ENCODE measurements at regions of chr5 and their contacts with region 1.

Region 1: DNA sequence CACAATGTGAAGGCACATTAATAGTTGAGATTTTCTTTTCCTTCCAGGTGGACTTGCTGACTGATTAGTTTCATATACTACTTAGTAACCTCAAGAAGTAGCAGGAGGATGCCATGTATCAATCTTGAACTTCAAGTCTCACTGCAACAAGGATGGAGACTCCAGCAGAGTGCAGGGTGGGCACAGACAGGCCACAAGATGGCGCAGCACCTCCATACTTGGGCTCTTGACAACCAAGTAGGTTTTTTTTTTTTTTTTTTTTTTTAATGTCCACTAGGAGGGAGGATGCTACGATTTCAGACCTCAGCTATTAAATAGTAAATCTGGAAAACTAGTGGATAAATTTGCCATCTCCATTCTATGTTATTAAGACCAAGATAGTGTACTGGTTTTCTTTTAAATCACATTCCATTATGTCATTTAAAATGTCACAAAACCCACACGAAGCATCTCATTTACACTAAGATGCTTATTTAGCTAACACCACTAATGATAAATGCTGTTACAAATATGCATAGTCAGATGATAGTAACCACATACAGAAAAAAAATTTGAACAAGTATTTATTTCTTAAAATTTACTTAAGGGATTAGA is 58.6 kb downstream of the IL6ST start:
- DNase-seq: peak; percentile 73 to 88 (median 81)
- ATAC-seq: peak; percentile 66 to 84 (median 82)
- H3K4me3 ChIP-seq: no peak overlapping the region
- H3K27ac ChIP-seq: no peak overlapping the region
- H3K4me1 ChIP-seq: peaks cover 0 to 7% (median 0%) of the 10 kb centered on the region in 12 donors
- H3K27me3 ChIP-seq: no peaks in the 10 kb centered on the region
- CTCF ChIP-seq: peak; percentile 78 to 94 (median 87)
- POLR2A ChIP-seq: no peak

Region 2: DNA sequence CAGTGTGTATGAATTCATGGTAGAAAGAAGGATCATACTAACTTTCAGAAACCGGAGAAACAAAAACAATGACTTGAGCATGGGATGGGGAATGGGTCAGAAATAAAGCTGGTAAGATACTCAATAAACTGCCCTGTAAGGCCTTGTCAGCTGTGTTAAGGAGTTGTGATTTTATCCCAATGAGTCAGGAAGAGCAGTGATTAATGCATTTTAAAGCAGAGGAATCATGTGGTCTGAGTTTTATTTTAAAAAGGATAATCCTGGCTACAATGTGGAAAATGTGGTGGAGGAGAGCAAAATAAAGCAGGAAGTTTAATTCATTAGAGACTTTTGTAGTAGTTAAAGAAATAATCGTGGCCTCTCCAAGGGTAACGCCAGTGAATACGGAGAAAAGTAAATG is 657.4 kb before region 1 on chr5:
- intact Hi-C with region 1: loop called in 1 of 10 experiments (anchors 10 kb)
- DNase-seq: no peak
- ATAC-seq: no peak
- H3K4me3 ChIP-seq: no peak overlapping the region
- H3K27ac ChIP-seq: no peak overlapping the region
- H3K4me1 ChIP-seq: no peaks in the 10 kb centered on the region
- H3K27me3 ChIP-seq: no peaks in the 10 kb centered on the region
- CTCF ChIP-seq: no peak
- POLR2A ChIP-seq: no peak

Region 3: DNA sequence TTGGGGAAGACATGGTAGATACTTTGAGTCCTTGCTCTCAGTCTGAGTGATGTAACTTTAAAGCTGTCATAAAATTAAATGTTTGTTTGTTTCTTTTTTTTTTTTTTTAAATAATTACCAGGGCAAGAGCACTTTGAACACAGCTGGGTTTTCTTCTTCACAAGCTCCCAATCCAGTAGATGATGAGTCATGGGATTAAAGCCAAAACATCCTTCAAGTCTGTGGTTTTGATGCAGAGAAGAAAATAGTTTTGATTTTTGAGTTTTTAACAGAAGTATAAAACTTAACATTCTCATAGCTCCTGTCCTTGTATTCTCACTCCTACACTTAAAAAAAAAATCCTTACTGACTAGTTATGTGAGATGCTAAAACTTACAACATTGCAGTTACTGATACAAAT is 119.9 kb before region 1 on chr5:
- intact Hi-C with region 1: no loop called
- DNase-seq: no peak
- ATAC-seq: no peak
- H3K4me3 ChIP-seq: no peak overlapping the region
- H3K27ac ChIP-seq: no peak overlapping the region
- H3K4me1 ChIP-seq: no peaks in the 10 kb centered on the region
- H3K27me3 ChIP-seq: peaks cover 0 to 15% (median 6%) of the 10 kb centered on the region in 9 donors
- CTCF ChIP-seq: no peak
- POLR2A ChIP-seq: no peak

Region 4: GRCh38 chr5:55982957-55983381 is 46.8 kb after region 1 on chr5:
- intact Hi-C with region 1: loop called in 1 of 10 experiments (anchors 5 kb)
- DNase-seq: no peak
- ATAC-seq: peak; percentile 31 to 65 (median 46)
- H3K4me3 ChIP-seq: no peak overlapping the region
- H3K27ac ChIP-seq: no peak overlapping the region
- H3K4me1 ChIP-seq: peaks cover 6 to 81% (median 33%) of the 10 kb centered on the region in 12 donors
- H3K27me3 ChIP-seq: no peaks in the 10 kb centered on the region
- CTCF ChIP-seq: peak in 7 of 12 donors; percentile 9 to 52 (median 28)
- POLR2A ChIP-seq: no peak

Region 5: DNA sequence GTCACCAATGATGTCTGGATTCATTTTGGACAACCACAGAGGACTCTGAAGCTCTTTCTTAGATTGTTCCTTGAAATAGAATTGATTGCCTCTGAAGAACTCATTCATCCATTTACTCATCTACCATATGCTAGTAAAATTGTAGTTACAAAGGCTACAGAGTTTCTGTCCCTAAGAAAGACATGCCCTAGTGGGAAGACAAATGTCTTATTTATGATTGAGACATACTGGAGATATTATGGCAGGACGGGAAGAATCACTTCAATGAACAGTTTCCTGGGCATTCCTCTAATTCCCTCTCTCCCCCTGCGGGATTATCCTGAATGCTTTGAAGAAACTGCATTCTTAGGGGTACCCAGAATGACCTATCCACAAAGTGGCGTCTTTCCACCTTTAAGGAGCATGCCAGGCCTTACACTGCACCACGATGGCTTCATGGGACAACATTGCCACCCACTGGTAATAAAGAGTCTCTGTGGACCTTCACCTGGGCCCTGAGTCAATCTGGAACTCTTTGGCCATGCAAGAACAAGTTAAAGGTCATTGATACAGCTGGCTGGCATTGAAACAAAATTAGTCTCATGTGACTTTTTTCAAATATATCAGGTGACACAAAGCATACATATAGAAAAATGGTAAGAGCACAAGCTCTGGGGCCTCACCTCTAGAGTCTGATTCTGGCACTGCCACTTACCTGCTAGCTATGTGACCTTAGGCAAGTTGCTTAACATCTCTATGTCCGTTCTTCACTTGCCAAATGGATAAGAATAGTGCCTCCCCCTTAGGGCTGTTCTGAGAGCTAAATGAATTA is 264.9 kb after region 1 on chr5:
- intact Hi-C with region 1: loop called (anchors 1 to 5 kb)
- DNase-seq: peak in 4 of 5 donors; percentile 47 to 69 (median 54)
- ATAC-seq: peak; percentile 91 to 99 (median 98)
- H3K4me3 ChIP-seq: no peak overlapping the region
- H3K27ac ChIP-seq: no peak overlapping the region
- H3K4me1 ChIP-seq: peaks cover 0 to 19% (median 0%) of the 10 kb centered on the region in 12 donors
- H3K27me3 ChIP-seq: no peaks in the 10 kb centered on the region
- CTCF ChIP-seq: peak; percentile 65 to 92 (median 78)
- POLR2A ChIP-seq: no peak

Region 6: GRCh38 chr5:56852228-56853000 is 916.2 kb after region 1 on chr5:
- intact Hi-C with region 1: loop called in 1 of 10 experiments (anchors 10 kb)
- DNase-seq: no peak
- ATAC-seq: peak in 1 of 4 donors; percentile 14
- H3K4me3 ChIP-seq: peak overlapping the region in 1 of 12 donors; percentile 4
- H3K27ac ChIP-seq: peak overlapping the region in 1 of 12 donors; percentile 50
- H3K4me1 ChIP-seq: peaks cover 3 to 100% (median 76%) of the 10 kb centered on the region in 12 donors
- H3K27me3 ChIP-seq: no peaks in the 10 kb centered on the region
- CTCF ChIP-seq: no peak
- POLR2A ChIP-seq: no peak

Region 7: DNA sequence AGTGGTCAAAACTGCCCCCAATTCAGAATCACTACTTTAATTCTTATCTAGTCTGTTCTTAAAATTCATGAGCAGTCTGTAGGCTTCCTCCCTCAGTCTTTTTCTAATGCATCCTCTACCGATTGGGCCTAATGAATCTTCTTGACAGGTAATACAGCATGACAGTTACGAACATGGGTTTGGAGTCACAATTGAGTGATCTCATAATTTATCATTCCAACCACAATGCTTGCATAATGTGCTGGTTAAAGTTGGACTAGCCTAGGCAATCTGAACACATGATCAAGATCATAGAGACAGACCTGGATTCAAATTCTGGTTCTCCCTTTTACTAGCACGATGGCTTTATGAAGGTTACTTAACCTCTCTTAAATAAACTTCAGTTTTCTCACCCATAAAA is 940.1 kb after region 1 on chr5:
- intact Hi-C with region 1: loop called in 1 of 10 experiments (anchors 10 kb)
- DNase-seq: no peak
- ATAC-seq: no peak
- H3K4me3 ChIP-seq: no peak overlapping the region
- H3K27ac ChIP-seq: no peak overlapping the region
- H3K4me1 ChIP-seq: peaks cover 0 to 10% (median 0%) of the 10 kb centered on the region in 12 donors
- H3K27me3 ChIP-seq: no peaks in the 10 kb centered on the region
- CTCF ChIP-seq: no peak
- POLR2A ChIP-seq: no peak